ENCODE measurements at regions of chr3 and their contacts with region 1.

Region 1: DNA sequence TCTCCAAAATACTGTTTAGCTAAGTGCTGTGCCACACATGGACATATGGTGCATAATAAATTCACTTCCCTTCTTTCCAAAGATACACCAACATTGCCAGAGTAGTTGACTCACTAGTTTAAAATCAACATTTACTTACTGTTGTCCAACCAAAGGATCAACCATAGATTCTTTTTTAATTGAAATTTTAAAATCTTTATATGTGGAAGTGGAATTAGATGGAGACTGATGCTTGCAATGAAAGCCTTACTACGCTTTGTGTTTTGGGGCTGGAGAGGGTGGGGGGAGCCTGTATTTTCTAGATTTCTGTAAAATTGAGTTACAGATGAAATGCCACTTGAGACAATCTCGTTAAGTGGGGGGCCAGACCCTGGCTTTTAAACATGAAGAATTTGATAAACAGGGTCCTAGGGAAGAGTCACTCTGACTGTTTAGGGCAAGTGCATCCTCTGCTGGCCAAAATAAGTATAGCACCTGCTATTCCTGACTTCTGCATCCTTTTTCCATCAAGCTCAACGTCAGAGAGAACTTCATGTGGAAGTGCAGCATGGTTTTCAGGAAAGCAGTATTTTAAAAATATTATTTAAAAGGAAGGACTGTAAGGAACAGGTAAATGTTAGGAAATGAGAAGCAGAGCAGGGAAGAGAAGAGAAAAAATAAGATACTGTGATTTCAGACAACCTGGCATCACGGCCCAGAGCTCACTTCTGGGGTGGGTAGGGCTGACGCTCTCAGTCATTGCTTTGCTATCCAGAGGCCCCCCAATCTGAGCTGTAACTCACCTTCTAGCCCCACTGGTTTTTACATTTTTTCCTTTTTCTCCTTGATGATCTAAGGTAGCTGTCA is 76.7 kb downstream of the BOC start:
- DNase-seq: peak; percentile 87
- ATAC-seq: peak; percentile 67
- H3K4me3 ChIP-seq: no peak overlapping the region
- H3K27ac ChIP-seq: no peak overlapping the region
- H3K4me1 ChIP-seq: peaks cover 8% of the 10 kb centered on the region
- H3K27me3 ChIP-seq: peaks cover 8% of the 10 kb centered on the region; the same call in 1 of the 2 replicates
- CTCF ChIP-seq: peak; percentile 100

Region 2: DNA sequence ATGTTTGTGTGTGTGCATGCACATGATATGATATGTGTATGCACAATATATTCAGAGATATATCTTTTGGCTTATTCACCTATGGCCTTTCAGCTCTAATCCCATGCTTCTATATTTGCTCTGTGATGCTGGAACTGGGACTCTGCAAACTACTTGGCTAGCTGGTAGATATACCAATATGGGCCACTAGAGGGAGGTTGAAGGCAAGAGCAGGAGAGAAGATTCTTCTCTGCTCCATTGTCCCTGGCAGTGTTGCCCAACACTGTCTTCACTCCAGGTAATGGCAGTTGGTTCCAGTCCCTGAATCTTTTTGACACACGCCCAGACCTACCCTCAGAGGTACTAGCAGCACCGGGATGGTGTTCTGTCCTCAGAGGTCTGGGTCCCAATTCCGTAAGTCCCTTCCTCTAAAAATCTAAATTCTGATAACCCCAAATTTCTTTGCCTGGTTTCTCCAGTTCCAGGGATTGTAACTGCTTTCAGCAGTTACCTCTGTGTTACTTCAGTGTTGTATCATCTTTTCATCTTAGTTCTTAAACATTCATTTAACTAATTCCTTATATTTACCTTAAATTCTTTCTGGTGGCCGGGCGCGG is 252.5 kb before region 1 on chr3:
- CTCF ChIA-PET with region 1: interaction called, 8 read pairs
- POLR2A ChIA-PET with region 1: no interaction called
- in situ Hi-C with region 1: no loop called
- intact Hi-C with region 1: loop called (anchors 5 kb)
- DNase-seq: peak; percentile 42
- ATAC-seq: peak; percentile 97
- H3K4me3 ChIP-seq: no peak overlapping the region
- H3K27ac ChIP-seq: no peak overlapping the region
- H3K4me1 ChIP-seq: no peaks in the 10 kb centered on the region
- H3K27me3 ChIP-seq: peaks cover 4% of the 10 kb centered on the region; the same call in 1 of the 2 replicates
- CTCF ChIP-seq: peak; percentile 94

Region 3: DNA sequence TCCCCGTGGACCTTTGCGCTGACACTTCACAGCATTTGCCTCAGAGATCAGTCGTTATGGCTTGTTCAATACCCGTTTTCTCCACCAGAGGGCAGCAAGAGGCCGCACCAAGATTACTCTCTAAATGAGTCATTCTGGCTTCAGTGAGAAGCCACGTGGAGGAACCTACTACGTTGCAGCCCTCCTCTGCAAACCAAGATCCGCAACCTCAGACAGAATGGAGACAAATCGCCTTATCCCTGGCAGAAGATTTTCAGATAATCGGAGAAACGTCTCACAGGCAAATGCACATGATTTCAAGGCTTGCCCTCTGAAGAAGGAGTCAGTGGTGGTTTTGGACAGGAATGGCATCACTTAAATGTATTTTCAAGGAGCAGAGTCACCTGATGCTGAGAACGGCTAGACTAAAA is 236.7 kb before region 1 on chr3:
- CTCF ChIA-PET with region 1: no interaction called
- POLR2A ChIA-PET with region 1: no interaction called
- in situ Hi-C with region 1: no loop called
- intact Hi-C with region 1: loop called (anchors 1 kb)
- DNase-seq: peak; percentile 69
- ATAC-seq: peak; percentile 97
- H3K4me3 ChIP-seq: no peak overlapping the region
- H3K27ac ChIP-seq: no peak overlapping the region
- H3K4me1 ChIP-seq: no peaks in the 10 kb centered on the region
- H3K27me3 ChIP-seq: peaks cover 5% of the 10 kb centered on the region
- CTCF ChIP-seq: peak; percentile 96

Region 4: GRCh38 chr3:113136071-113136470 is 152.0 kb before region 1 on chr3:
- CTCF ChIA-PET with region 1: interaction called, 5 read pairs
- POLR2A ChIA-PET with region 1: no interaction called
- in situ Hi-C with region 1: no loop called
- intact Hi-C with region 1: loop called (anchors 1 kb)
- DNase-seq: peak; percentile 8
- ATAC-seq: peak; percentile 63; the same call in 1 of the 2 replicates
- H3K4me3 ChIP-seq: no peak overlapping the region
- H3K27ac ChIP-seq: no peak overlapping the region
- H3K4me1 ChIP-seq: no peaks in the 10 kb centered on the region
- H3K27me3 ChIP-seq: no peaks in the 10 kb centered on the region
- CTCF ChIP-seq: peak; percentile 72

Measured in Panc1 (cell line).